Right ventricle myocardium inferior (tissue), 1 donor: ENCODE measurements at regions of chr19 and their contacts with region 1.

Region 1: GRCh38 chr19:28737021-28737895 is 475.7 kb downstream of the UQCRFS1 start:
- DNase-seq: no peak
- ATAC-seq: peak; percentile 62

Region 2: DNA sequence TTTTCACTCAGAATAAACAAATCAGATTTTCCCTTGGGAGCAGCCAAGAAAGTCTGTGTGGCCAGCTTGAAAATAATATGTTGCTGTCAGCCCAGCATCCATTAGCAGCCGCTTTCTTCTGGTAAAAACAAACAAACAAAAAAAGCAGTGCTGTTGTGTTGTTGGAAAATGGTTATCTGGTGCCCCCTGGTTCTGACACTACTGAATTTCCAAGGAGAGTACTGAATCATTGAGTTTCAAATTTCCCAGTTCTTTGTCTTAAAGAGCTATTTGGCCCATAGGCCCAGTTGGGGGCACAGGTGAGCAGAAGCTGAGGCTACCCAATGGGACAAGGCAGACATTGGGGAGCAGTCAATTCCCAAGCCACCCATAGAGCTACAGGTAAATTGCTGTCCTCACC is 520.2 kb before region 1 on chr19:
- intact Hi-C with region 1: no loop called
- DNase-seq: no peak
- ATAC-seq: no peak

Region 3: GRCh38 chr19:28694819-28695218 is 42.4 kb before region 1 on chr19:
- intact Hi-C with region 1: no loop called
- DNase-seq: no peak
- ATAC-seq: no peak

Region 4: GRCh38 chr19:28793391-28794168 is 56.3 kb after region 1 on chr19:
- intact Hi-C with region 1: no loop called
- DNase-seq: no peak
- ATAC-seq: peak; percentile 89

Region 5: GRCh38 chr19:29263305-29264135 is 526.3 kb after region 1 on chr19:
- intact Hi-C with region 1: loop called (anchors 10 kb)
- DNase-seq: no peak
- ATAC-seq: peak; percentile 30